ENCODE measurements at regions of chr20 and their contacts with region 1.

Region 1: GRCh38 chr20:52083627-52084232 is 107.8 kb downstream of the ZFP64 start:
- DNase-seq: no peak
- H3K4me3 ChIP-seq: no peak overlapping the region
- CTCF ChIP-seq: peak; percentile 51

Region 2: GRCh38 chr20:51639206-51639832 is 444.4 kb before region 1 on chr20:
- CTCF ChIA-PET with region 1: interaction called, 98 read pairs
- POLR2A ChIA-PET with region 1: no interaction called
- DNase-seq: no peak
- H3K4me3 ChIP-seq: no peak overlapping the region
- CTCF ChIP-seq: peak; percentile 88

Region 3: DNA sequence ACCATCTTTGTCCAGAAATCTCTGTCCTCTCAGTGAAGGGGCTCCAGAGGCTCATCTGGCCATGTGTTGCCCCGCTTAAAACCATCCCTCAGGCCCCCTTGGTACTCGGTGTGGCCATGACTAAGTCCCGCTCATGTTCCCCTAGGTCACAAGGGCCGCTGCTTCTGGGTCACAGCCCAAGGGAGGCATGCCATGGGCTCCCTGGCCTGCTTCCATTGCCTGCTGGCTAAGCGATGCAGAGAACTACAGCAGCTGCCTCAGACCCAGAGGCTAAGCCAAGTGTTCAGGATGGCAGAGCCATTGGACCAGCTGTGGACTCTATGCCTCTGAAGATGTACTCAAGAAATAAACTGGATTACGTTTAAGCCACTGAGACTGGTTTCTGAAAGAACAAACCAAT is 12.4 kb after region 1 on chr20:
- CTCF ChIA-PET with region 1: interaction called, 34 read pairs
- POLR2A ChIA-PET with region 1: no interaction called
- DNase-seq: no peak
- H3K4me3 ChIP-seq: no peak overlapping the region
- CTCF ChIP-seq: no peak